Breast epithelium (tissue), 4 donors: ENCODE measurements at regions of chr10 and their contacts with region 1.

Region 1: DNA sequence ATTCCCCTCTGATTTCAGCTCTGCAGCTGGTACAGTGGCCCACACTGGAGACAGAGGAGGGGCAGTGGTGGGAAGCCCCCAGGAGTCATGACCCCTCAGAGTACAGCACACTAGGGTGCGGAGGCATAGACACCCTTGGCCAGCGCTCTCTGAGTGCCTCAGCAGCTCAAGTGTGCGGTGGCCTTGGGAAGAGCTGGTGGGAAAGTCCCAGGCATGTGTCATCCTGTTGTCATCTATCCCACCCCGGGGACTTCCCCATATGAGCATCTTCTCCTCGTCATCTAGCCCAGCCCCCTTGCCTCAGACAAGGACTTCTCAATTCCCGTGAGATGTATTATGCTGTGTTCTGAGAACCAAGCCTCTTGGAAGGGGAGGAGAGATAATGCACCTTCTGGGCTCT is 15.6 kb upstream of the PPIF start:
- DNase-seq: no peak
- H3K4me3 ChIP-seq: no peak overlapping the region
- H3K27ac ChIP-seq: no peak overlapping the region
- H3K4me1 ChIP-seq: no peaks in the 10 kb centered on the region
- H3K27me3 ChIP-seq: no peaks in the 10 kb centered on the region
- CTCF ChIP-seq: no peak
- POLR2A ChIP-seq: no peak

Region 2: GRCh38 chr10:78777466-78777865 is 554.2 kb before region 1 on chr10:
- intact Hi-C with region 1: loop called (anchors 5 kb)
- DNase-seq: no peak
- H3K4me3 ChIP-seq: no peak overlapping the region
- H3K27ac ChIP-seq: peak overlapping the region; percentile 7 to 33
- H3K4me1 ChIP-seq: no peaks in the 10 kb centered on the region
- H3K27me3 ChIP-seq: no peaks in the 10 kb centered on the region
- CTCF ChIP-seq: no peak
- POLR2A ChIP-seq: no peak

Region 3: GRCh38 chr10:79127151-79127961 is 204.4 kb before region 1 on chr10:
- intact Hi-C with region 1: no loop called
- DNase-seq: peak; percentile 63 to 70
- H3K4me3 ChIP-seq: no peak overlapping the region
- H3K27ac ChIP-seq: peak overlapping the region in 1 of 2 donors; percentile 30
- H3K4me1 ChIP-seq: peaks cover 0 to 9% of the 10 kb centered on the region in 2 donors
- H3K27me3 ChIP-seq: no peaks in the 10 kb centered on the region
- CTCF ChIP-seq: no peak
- POLR2A ChIP-seq: no peak

Region 4: GRCh38 chr10:79268161-79268601 is 63.5 kb before region 1 on chr10:
- intact Hi-C with region 1: loop called (anchors 2 kb)
- DNase-seq: no peak
- H3K4me3 ChIP-seq: no peak overlapping the region
- H3K27ac ChIP-seq: peak overlapping the region; percentile 73 to 89
- H3K4me1 ChIP-seq: peaks cover 9 to 26% of the 10 kb centered on the region in 2 donors
- H3K27me3 ChIP-seq: no peaks in the 10 kb centered on the region
- CTCF ChIP-seq: no peak
- POLR2A ChIP-seq: no peak